Prostate gland (tissue), 2 donors: ENCODE measurements at regions of chr1 and their contacts with region 1.

Region 1: GRCh38 chr1:61049850-61050540 is 32.4 kb upstream of the NFIA start:
- DNase-seq: peak; percentile 95
- H3K4me3 ChIP-seq: peak overlapping the region; percentile 87 to 96
- H3K27ac ChIP-seq: peak overlapping the region; percentile 95 to 96
- H3K4me1 ChIP-seq: peaks cover 6% of the 10 kb centered on the region
- H3K27me3 ChIP-seq: no peaks in the 10 kb centered on the region
- CTCF ChIP-seq: peak; percentile 97 to 98 (median 98)
- POLR2A ChIP-seq: no peak

Region 2: DNA sequence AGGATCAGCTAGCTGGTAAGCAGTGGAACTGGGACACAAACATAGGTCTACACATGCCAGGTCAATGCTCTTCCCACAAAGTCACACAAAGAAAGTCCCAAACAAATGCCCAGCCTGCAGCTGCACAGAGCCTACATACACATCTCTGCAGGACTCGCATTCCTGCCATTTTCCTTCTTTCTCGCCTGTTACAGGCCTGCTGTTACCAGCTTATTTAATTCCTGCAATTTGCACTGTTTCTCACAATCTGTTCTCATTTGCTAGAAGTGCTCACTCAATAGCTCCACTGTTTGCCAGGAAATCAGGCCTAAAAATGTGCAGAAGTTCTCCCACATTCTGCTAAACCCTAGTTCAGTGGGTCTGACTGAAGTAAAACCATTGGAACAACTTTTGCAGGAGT is 613.8 kb before region 1 on chr1:
- intact Hi-C with region 1: no loop called
- DNase-seq: no peak
- H3K4me3 ChIP-seq: no peak overlapping the region
- H3K27ac ChIP-seq: no peak overlapping the region
- H3K4me1 ChIP-seq: no peaks in the 10 kb centered on the region
- H3K27me3 ChIP-seq: no peaks in the 10 kb centered on the region
- CTCF ChIP-seq: no peak
- POLR2A ChIP-seq: no peak

Region 3: DNA sequence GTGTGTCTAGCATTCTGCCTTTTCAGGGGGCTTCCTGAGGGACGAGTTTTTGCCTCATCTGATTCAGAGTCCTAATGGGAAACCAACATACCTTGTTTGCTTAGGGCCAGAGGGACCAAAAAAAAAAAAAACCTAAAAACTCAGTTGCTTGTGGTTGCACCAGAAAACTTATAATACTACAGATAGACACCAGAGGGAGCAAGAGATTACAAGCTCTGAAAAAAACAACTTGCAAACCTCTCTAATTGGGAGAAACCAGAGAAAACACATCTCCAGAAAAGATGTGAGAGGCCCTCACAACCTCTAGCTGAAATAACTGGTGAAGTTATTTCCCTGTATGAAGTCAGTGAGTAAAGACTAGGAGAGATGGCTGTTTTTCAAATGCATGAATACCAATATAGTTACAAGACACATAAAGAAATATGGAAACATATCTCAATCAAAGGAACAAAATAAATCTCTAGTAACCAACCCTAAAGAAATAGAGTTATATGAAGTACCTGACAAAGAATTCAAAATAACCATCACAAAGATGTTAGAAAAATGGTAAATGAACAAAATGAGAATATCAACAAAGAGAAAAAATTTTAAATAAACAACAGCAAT is 201.3 kb before region 1 on chr1:
- intact Hi-C with region 1: loop called (anchors 10 kb)
- DNase-seq: no peak
- H3K4me3 ChIP-seq: no peak overlapping the region
- H3K27ac ChIP-seq: no peak overlapping the region
- H3K4me1 ChIP-seq: no peaks in the 10 kb centered on the region
- H3K27me3 ChIP-seq: no peaks in the 10 kb centered on the region
- CTCF ChIP-seq: peak in 2 of 4 experiments; percentile 22 to 40
- POLR2A ChIP-seq: no peak

Region 4: GRCh38 chr1:61184040-61184713 is 134.2 kb after region 1 on chr1:
- intact Hi-C with region 1: loop called (anchors 10 kb)
- DNase-seq: peak; percentile 95
- H3K4me3 ChIP-seq: peak overlapping the region; percentile 21 to 30
- H3K27ac ChIP-seq: peak overlapping the region; percentile 73 to 83
- H3K4me1 ChIP-seq: peaks cover 7% of the 10 kb centered on the region
- H3K27me3 ChIP-seq: no peaks in the 10 kb centered on the region
- CTCF ChIP-seq: no peak
- POLR2A ChIP-seq: no peak

Region 5: GRCh38 chr1:61337981-61338848 is 288.2 kb after region 1 on chr1:
- intact Hi-C with region 1: loop called (anchors 5 kb)
- DNase-seq: peak; percentile 86
- H3K4me3 ChIP-seq: peak overlapping the region in 1 of 2 donors; percentile 13
- H3K27ac ChIP-seq: peak overlapping the region; percentile 55 to 68
- H3K4me1 ChIP-seq: no peaks in the 10 kb centered on the region
- H3K27me3 ChIP-seq: no peaks in the 10 kb centered on the region
- CTCF ChIP-seq: peak; percentile 55 to 83 (median 82)
- POLR2A ChIP-seq: no peak

Region 6: GRCh38 chr1:61453111-61453961 is 403.3 kb after region 1 on chr1:
- intact Hi-C with region 1: loop called (anchors 2 kb)
- DNase-seq: peak; percentile 84
- H3K4me3 ChIP-seq: no peak overlapping the region
- H3K27ac ChIP-seq: peak overlapping the region; percentile 49 to 59
- H3K4me1 ChIP-seq: peaks cover 12% of the 10 kb centered on the region
- H3K27me3 ChIP-seq: no peaks in the 10 kb centered on the region
- CTCF ChIP-seq: peak in 3 of 4 experiments; percentile 59 to 78 (median 74)
- POLR2A ChIP-seq: no peak

Region 7: GRCh38 chr1:61724813-61725694 is 675.1 kb after region 1 on chr1 and contains the start of gene TM2D1:
- intact Hi-C with region 1: loop called (anchors 10 kb)
- DNase-seq: peak; percentile 85
- H3K4me3 ChIP-seq: peak within 1 kb of the TSS; percentile 84 to 92
- H3K27ac ChIP-seq: peak within 1 kb of the TSS; percentile 88 to 91
- H3K4me1 ChIP-seq: no peaks in the 10 kb centered on the region
- H3K27me3 ChIP-seq: no peaks in the 10 kb centered on the region
- CTCF ChIP-seq: peak in 1 of 4 experiments; percentile 13
- POLR2A ChIP-seq: peak; percentile 78
- total RNA-seq, gene TM2D1: 59.6 to 86.9 TPM